PC-3 (cell line): ENCODE measurements at regions of chr7 and their contacts with region 1.

Region 1: DNA sequence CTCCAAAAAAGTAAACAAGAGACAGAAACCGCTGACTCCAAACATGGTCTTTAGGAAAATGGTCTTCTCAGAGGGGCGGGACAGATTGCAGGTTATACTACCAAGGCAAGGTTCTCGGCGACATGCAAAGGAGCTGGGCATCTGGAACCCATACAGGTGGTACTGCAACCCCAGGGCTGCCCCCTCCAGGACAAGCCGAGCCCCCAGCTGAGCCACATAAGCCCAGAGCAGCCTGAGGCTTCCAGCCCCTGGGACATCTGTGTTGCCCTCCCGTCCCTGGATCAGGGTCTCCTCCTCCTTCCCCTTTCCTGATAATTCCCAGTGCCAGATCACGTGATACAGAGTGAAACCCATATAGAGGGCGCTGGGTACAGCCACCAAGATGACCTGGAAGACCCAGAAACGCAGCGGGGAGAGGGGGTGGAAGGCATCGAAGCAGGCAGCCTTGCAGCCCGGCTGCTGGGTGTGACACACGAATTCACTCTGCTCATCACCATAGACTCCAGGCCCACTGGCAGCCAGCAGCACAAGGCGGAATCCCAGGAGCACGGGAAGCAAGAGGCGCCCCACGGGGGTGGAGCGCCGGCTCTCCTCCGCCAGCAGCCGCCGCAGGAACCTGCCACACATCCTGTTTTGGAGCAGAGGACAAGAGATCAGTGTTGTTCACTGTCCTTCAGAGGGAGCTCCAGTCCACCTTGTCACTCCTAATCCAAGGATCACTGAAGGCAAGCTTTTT is at the start of gene GJC3:
- DNase-seq: peak; percentile 59
- ATAC-seq: peak; percentile 99
- H3K4me3 ChIP-seq: peak within 1 kb of the TSS; percentile 56
- H3K27ac ChIP-seq: no peak within 1 kb of the TSS
- H3K4me1 ChIP-seq: no peaks in the 10 kb centered on the region; the same call in 1 of the 2 replicates
- H3K27me3 ChIP-seq: peaks cover 31% of the 10 kb centered on the region
- CTCF ChIP-seq: peak; percentile 57
- total RNA-seq, gene GJC3: 0.18 TPM in 1 of 2 replicates, not detected in the other

Region 2: GRCh38 chr7:99949638-99950228 is 20.6 kb after region 1 on chr7:
- CTCF ChIA-PET with region 1: no interaction called
- POLR2A ChIA-PET with region 1: interaction called, 5 read pairs
- intact Hi-C with region 1: loop called (anchors 1 kb)
- DNase-seq: peak; percentile 14
- ATAC-seq: no peak
- H3K4me3 ChIP-seq: no peak overlapping the region
- H3K27ac ChIP-seq: no peak overlapping the region
- H3K4me1 ChIP-seq: no peaks in the 10 kb centered on the region
- H3K27me3 ChIP-seq: no peaks in the 10 kb centered on the region
- CTCF ChIP-seq: peak; percentile 41; the same call in 1 of the 2 replicates

Region 3: GRCh38 chr7:99990460-99990852 is 61.3 kb after region 1 on chr7:
- CTCF ChIA-PET with region 1: interaction called, 4 read pairs
- POLR2A ChIA-PET with region 1: no interaction called
- intact Hi-C with region 1: loop called (anchors 2 kb)
- DNase-seq: no peak
- ATAC-seq: no peak
- H3K4me3 ChIP-seq: no peak overlapping the region; the same call in 1 of the 2 replicates
- H3K27ac ChIP-seq: no peak overlapping the region
- H3K4me1 ChIP-seq: 0 out of 2 replicates have a peak, but pooled peaks cover 5% of the 10 kb centered on the region
- H3K27me3 ChIP-seq: peaks cover 5% of the 10 kb centered on the region; the same call in 1 of the 2 replicates
- CTCF ChIP-seq: no peak